ENCODE measurements at regions of chr15 and their contacts with region 1.

Region 1: DNA sequence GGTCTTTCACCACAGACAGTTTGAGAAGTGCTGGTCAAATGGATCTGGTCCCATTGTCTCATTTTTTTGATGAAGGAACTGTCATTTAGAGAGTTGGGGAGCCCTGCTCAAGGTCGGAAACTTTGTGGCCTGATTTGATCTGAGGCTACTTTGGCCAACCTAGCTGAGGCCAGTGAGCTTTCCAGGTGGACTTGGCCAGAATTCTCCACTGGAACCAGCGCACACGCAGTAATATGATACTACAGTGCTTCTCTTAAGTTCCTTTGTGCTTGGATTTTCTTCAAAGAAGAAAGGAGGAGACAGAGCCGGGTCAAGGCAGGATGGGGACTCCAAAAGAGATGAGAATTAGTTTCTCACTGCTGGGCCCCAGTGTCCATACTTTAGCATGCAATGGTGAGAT is 50.5 kb downstream of the CCNB2 start:
- DNase-seq: no peak
- H3K4me3 ChIP-seq: no peak overlapping the region
- H3K27ac ChIP-seq: no peak overlapping the region
- H3K4me1 ChIP-seq: no peaks in the 10 kb centered on the region
- H3K27me3 ChIP-seq: no peaks in the 10 kb centered on the region
- CTCF ChIP-seq: no peak
- POLR2A ChIP-seq: no peak

Region 2: DNA sequence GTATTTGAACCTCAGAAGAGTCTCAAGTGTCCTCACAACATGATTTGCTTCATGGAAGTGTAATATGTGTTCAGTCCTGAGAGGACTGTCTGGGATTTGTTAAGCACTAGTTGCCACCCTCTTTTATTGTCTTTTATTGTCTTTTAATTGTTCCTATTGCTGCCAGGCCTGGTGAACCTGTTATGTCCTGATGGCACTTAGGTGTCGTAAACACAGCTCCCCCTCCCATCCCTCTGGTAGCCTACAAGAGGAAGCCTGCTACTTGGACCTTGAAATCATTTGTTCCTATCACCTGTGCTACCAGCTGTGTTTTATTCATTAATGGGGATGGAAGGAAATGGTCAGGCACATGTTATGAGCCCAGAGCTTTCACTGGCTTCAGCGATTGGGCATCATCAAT is 31.2 kb before region 1 on chr15:
- CTCF ChIA-PET with region 1: no interaction called
- POLR2A ChIA-PET with region 1: interaction called, 11 read pairs
- dilution Hi-C with region 1: no loop called
- intact Hi-C with region 1: no loop called
- DNase-seq: no peak
- H3K4me3 ChIP-seq: no peak overlapping the region
- H3K27ac ChIP-seq: no peak overlapping the region
- H3K4me1 ChIP-seq: no peaks in the 10 kb centered on the region
- H3K27me3 ChIP-seq: no peaks in the 10 kb centered on the region
- CTCF ChIP-seq: no peak
- POLR2A ChIP-seq: no peak